ENCODE measurements at regions of chr6 and their contacts with region 1.

Region 1: GRCh38 chr6:109059571-109060021 is 35.0 kb downstream of the SESN1 start:
- DNase-seq: no peak
- ATAC-seq: peak; percentile 63 to 84 (median 78)
- H3K4me3 ChIP-seq: peak overlapping the region in 1 of 12 donors; percentile 24
- H3K27ac ChIP-seq: peak overlapping the region in 10 of 12 donors; percentile 2 to 72 (median 48)
- H3K4me1 ChIP-seq: peaks cover 12 to 83% (median 40%) of the 10 kb centered on the region in 12 donors
- H3K27me3 ChIP-seq: no peaks in the 10 kb centered on the region
- CTCF ChIP-seq: peak in 9 of 12 donors; percentile 13 to 48 (median 37)
- POLR2A ChIP-seq: no peak

Region 2: DNA sequence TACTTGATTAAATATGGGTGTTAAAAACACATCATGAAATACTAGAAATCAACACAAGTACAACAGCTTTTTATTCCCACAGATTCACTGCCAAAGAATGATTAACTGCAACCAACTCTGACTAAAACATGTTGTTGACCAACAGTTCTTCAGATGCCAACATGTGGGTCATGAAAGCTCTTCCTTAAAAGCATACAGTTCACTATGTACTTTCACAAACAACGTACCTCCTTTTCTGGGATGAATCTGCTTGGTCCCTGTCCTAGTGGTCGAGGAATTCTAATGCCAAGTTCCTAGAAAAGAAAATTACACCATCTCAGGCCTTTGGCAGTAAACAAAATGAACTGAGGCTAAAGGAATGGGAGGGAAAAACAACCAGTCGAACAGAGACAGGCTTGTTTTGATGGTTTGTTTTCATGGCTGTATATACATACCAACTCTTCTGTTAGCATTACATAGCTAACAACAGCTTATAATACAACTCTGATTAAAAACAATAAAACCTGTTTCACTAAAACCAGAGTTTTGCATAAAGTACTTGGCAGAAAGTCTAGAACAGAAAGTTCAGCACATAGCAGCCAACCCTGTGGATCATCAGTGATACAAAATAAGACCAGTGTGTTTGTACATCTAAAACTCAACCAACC is 57.4 kb before region 1 on chr6:
- intact Hi-C with region 1: loop called in 3 of 10 experiments (anchors 5 to 10 kb)
- DNase-seq: no peak
- ATAC-seq: peak; percentile 50 to 69 (median 60)
- H3K4me3 ChIP-seq: peak overlapping the region in 3 of 12 donors; percentile 6 to 14 (median 8)
- H3K27ac ChIP-seq: peak overlapping the region; percentile 34 to 89 (median 69)
- H3K4me1 ChIP-seq: peaks cover 5 to 89% (median 53%) of the 10 kb centered on the region in 12 donors
- H3K27me3 ChIP-seq: no peaks in the 10 kb centered on the region
- CTCF ChIP-seq: no peak
- POLR2A ChIP-seq: peak in 1 of 2 donors; percentile 7

Region 3: GRCh38 chr6:109009236-109009961 is 50.2 kb before region 1 on chr6:
- intact Hi-C with region 1: loop called in 4 of 10 experiments (anchors 2 to 10 kb)
- DNase-seq: peak; percentile 95 to 98 (median 96)
- ATAC-seq: peak; percentile 86 to 99 (median 96)
- H3K4me3 ChIP-seq: peak overlapping the region; percentile 61 to 93 (median 85)
- H3K27ac ChIP-seq: peak overlapping the region; percentile 85 to 98 (median 93)
- H3K4me1 ChIP-seq: peaks cover 0 to 84% (median 37%) of the 10 kb centered on the region in 12 donors
- H3K27me3 ChIP-seq: no peaks in the 10 kb centered on the region
- CTCF ChIP-seq: peak in 9 of 12 donors; percentile 8 to 50 (median 29)
- POLR2A ChIP-seq: peak; percentile 73 to 96

Region 4: DNA sequence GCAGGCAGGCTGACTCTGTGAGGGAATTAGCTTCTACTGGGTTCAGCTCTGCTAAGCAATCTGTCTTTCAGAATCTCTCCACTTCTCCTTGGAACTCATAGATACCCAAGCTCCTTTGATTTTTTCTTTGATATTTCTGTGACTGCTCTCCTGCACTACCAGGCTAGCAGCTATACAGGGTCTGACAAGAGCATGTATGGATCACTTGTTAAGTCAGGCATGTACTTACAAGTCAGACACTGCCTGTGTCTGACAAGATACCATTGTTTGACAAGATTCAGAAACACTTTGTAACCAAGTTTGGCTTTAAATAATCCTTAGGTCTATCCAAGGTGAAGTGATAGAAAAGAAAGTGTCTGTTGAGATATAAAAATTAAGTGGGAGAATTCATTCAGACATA is 44.4 kb before region 1 on chr6:
- intact Hi-C with region 1: loop called in 1 of 10 experiments (anchors 5 kb)
- DNase-seq: no peak
- ATAC-seq: no peak
- H3K4me3 ChIP-seq: no peak overlapping the region
- H3K27ac ChIP-seq: peak overlapping the region in 6 of 12 donors; percentile 13 to 82 (median 26)
- H3K4me1 ChIP-seq: peaks cover 0 to 68% (median 32%) of the 10 kb centered on the region in 12 donors
- H3K27me3 ChIP-seq: no peaks in the 10 kb centered on the region
- CTCF ChIP-seq: no peak
- POLR2A ChIP-seq: no peak

Measured in heart left ventricle (tissue), 16 donors.